Caki2 (cell line): ENCODE measurements at regions of chr3 and their contacts with region 1.

Region 1: DNA sequence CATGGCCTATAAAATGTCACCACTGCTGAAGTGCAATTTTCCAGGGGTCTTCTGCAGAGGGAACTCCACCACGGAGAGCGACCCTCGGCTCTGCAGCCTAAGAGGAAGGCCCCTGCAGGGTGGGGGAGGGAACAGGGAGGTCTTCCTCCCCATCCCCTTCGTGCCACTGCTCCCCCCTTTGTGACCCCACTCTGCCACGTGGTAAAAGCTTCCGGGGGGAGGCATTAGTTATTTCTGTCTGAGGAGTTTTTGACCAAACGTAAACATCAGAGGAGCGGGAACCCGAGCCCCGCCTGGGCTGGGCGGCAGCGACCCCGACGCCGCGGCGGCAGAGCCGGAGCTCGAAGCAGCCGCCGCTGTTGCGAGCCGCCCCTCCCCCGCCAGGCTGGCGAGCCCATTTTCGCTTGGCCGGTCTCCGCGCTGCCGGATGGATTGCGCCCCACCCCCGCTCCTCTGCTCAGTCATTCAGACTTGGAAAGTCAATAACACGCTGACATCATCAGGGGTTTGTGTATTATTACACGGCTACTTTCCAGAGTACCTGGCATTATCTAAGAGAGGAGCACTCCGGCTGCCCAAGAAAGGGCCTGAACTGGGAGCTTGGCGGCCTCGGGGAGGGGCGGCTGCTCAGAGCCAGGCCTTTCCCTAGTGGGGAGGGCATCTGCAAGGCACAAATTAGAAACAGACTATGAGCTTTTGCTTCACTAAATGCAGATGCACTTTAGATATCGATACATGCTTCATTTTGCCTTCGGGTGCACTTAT is 162.5 kb upstream of the TBL1XR1 start:
- DNase-seq: peak; percentile 98

Region 2: GRCh38 chr3:177050501-177051237 is 309.1 kb before region 1 on chr3:
- in situ Hi-C with region 1: no loop called
- DNase-seq: peak; percentile 36

Region 3: DNA sequence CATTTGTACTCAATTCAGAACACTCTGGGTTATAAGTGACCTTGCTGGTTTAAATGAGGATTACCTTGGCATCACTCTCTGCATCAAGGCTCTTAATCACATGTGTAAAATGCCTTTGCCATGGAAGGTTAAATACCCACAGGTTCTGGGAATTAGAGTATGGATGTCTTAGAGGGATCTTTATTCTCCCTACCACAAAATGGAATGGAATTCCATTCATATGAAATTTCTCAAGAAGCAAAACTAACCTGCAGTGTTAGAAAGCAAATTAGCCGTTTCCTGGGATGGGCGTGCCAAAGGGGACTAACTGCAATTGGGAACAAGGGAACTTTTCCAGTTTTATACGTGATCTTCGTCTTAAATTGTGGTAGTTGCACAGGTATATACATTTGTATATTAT is 202.3 kb before region 1 on chr3:
- in situ Hi-C with region 1: no loop called
- DNase-seq: no peak

Region 4: DNA sequence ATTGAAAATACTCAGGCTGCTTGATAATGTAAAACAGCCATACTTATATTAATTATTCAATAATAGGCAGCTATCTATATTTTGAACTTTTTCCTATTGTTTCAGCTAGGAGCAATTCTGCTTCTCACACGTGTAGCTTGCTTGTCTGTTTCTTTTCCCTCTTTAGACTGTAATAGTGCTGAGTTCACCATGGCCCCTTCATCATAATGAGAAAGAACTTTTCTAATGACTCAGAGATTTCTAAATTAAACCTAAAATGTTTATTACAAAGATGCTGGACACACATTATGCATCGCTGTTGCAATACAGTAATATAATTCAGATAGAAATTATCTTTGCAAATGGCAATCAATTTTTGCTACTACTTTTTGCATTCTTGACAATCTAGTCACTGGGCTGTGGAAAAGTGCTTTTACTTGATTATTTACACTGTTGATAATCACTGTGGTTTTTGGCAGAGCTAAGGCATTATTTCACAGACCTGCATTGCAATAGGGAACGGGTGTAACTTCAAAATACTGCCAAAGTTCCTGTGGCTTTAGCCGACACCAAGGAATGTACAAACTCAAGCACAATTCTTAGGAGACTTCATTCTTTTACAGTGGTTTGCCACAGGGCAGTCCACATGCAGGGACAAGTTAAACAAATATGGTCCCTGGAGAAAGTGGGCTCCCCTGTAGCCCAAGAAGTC is 118.5 kb after region 1 on chr3:
- in situ Hi-C with region 1: loop called (anchors 25 kb)
- DNase-seq: peak; percentile 97